Left ventricle myocardium superior (tissue), 1 donor: ENCODE measurements at regions of chr6 and their contacts with region 1.

Region 1: GRCh38 chr6:165850434-165851019 is 187.5 kb upstream of the PDE10A start:
- DNase-seq: peak; percentile 85
- ATAC-seq: peak; percentile 85

Region 2: DNA sequence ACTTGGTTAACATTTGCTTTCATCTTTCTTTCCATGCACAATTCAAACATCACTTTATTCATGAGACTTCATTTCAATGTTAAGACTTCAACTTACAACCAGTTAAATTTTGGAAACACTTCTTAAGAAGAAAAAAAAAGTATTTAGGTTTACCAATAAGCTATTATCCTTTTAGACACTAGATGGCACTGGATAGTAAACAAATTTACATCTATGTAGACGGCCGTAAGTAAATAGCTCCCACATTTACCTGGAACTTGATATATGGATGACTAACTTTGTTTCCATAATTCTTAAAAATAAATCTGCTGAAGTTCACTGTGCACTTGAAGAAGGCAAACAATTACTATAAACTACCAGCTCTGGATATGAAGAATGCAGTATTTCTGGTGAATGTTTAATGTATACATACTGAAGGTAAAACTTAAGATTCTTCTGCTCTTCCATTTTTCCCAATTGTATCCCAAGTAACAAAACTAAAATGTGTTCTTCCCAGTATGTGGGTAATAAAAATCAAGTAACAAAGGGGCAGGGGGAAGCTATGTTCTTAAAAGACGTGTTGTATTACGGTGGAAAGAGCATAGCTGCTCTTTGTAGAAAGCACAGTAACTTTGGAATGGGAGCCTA is 410.5 kb before region 1 on chr6:
- intact Hi-C with region 1: loop called (anchors 5 kb)
- DNase-seq: no peak
- ATAC-seq: peak; percentile 22

Region 3: GRCh38 chr6:165636402-165637048 is 214.0 kb before region 1 on chr6:
- intact Hi-C with region 1: no loop called
- DNase-seq: no peak
- ATAC-seq: no peak

Region 4: DNA sequence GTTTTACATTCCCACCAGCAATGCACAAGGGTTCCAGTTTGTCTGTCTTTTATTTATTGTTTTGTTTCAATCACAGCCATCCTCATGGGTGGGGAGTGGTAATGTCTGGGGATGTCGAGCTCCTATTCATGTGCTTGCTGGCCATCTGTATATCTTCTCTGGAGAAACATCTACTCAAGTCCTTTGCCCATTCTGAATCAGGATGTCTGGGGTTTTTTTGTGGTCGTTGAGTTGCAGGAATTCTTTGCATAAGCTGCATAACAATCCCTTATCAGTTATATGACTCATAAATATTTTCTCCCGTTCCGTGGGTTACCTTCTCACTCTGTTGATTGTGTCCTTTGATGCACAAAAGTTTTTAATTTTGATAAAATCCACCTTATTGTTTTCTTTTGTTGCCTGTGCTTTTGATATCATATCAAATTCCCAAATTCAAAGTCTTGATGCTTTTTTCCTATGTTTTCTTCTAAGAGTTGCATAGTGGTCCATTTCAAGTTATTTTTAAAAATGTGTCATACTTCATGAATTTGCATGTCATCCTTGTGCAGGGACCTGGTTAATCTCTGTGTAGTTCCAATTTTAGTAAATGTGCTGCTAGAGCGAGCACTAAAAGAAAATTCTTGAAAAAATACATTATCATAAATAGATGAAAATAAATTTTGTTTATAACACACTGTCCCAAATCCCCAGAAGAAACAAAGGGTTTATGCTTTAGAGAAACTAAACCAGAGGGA is 132.6 kb before region 1 on chr6:
- intact Hi-C with region 1: no loop called
- DNase-seq: no peak
- ATAC-seq: no peak

Region 5: GRCh38 chr6:165729307-165729936 is 121.1 kb before region 1 on chr6:
- intact Hi-C with region 1: loop called (anchors 2 kb)
- DNase-seq: peak; percentile 39
- ATAC-seq: peak; percentile 61

Region 6: GRCh38 chr6:166325383-166326042 is 475.0 kb after region 1 on chr6:
- intact Hi-C with region 1: no loop called
- DNase-seq: no peak
- ATAC-seq: no peak